ENCODE measurements at regions of chr7 and their contacts with region 1.

Region 1: GRCh38 chr7:92245487-92246362 is at the starts of genes ANKIB1 and KRIT1:
- DNase-seq: peak; percentile 87 to 91
- ATAC-seq: peak; percentile 95 to 97 (median 95)
- H3K4me3 ChIP-seq: peak within 1 kb of the TSS; percentile 66 to 91 (median 84)
- H3K27ac ChIP-seq: peak within 1 kb of the TSS; percentile 55 to 96 (median 89)
- H3K4me1 ChIP-seq: peaks cover 2 to 43% (median 36%) of the 10 kb centered on the region in 9 donors
- H3K27me3 ChIP-seq: no peaks in the 10 kb centered on the region
- CTCF ChIP-seq: peak in 6 of 9 donors; percentile 11 to 54 (median 36)
- total RNA-seq, gene ANKIB1: 28.7 to 71.0 (median 45.7) TPM
- total RNA-seq, gene KRIT1: 21.9 to 40.8 (median 32.1) TPM

Region 2: GRCh38 chr7:92228100-92228499 is 17.6 kb before region 1 on chr7:
- intact Hi-C with region 1: loop called in 1 of 10 experiments (anchors 1 kb)
- DNase-seq: no peak
- ATAC-seq: no peak
- H3K4me3 ChIP-seq: no peak overlapping the region
- H3K27ac ChIP-seq: no peak overlapping the region
- H3K4me1 ChIP-seq: no peaks in the 10 kb centered on the region
- H3K27me3 ChIP-seq: no peaks in the 10 kb centered on the region
- CTCF ChIP-seq: no peak

Region 3: DNA sequence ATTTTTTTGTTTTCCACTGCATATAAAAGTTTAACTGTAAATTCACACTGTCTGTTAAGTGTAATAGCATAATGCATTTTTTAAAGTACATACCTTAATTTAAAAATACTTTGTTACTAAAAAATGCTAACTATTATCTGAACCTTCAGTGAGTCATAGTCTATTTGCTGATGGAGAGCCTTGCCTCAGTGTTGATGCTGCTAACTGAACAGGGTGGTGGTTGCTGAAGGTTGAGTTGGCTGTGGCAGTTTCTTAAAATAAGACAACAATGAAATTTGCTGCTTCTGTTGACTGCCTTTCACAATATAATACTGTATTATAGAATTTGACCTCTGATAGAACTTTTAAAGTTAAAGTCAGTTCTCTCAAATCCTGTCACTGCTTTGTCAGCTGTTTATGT is 129.3 kb after region 1 on chr7:
- intact Hi-C with region 1: loop called in 1 of 10 experiments (anchors 10 kb)
- DNase-seq: no peak
- ATAC-seq: no peak
- H3K4me3 ChIP-seq: no peak overlapping the region
- H3K27ac ChIP-seq: no peak overlapping the region
- H3K4me1 ChIP-seq: no peaks in the 10 kb centered on the region
- H3K27me3 ChIP-seq: no peaks in the 10 kb centered on the region
- CTCF ChIP-seq: no peak

Region 4: GRCh38 chr7:92421676-92422435 is 176.1 kb after region 1 on chr7:
- intact Hi-C with region 1: loop called in 1 of 10 experiments (anchors 10 kb)
- DNase-seq: no peak
- ATAC-seq: no peak
- H3K4me3 ChIP-seq: no peak overlapping the region
- H3K27ac ChIP-seq: no peak overlapping the region
- H3K4me1 ChIP-seq: peaks cover 0 to 13% (median 0%) of the 10 kb centered on the region in 9 donors
- H3K27me3 ChIP-seq: peaks cover 0 to 17% (median 15%) of the 10 kb centered on the region in 7 donors
- CTCF ChIP-seq: no peak

Region 5: DNA sequence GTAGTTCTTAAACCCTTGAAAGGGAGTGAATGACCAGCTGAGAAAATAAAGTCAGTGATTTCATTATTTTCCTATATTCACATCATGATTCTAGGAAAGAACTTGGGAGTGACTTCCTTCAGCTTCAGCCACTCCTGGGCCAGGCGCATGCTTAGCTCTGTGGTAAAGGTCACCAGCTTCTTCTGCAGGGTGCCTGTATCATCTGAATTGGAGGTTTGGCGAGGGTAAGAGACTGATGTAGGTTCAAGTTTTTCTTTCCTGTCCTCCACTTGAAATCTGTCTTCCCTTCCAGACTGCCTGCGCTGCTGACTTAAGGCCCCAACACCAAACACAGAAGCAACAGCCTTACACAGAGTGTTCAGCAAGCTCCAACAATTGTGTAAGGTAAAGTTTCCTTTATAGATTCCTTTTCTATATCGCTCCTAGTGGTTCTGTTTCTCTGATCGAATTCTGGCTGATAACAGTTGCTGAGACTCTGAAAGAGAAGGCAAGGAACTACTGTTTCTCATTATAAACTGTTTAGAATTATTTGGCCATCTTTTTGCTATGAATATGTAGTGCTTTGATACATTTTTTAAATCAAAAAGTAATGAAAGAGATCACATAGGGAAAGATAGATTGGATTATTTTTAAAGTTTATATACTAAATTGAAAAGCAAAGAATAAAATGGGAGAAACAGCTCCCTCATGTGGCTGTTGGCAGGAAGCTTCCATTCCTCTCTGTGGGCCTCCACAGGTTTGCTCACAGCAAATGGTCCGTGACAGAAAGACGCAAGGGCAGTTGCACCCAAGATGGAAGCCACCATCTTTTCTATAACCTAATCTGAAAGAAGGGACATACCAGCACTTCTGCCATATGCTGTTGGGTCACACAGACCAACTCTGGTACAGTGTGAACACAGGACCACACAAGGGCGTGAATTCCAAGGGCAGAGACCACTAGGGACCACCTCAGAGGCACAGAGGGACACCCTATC is 215.6 kb after region 1 on chr7:
- intact Hi-C with region 1: loop called in 1 of 10 experiments (anchors 5 kb)
- DNase-seq: peak in 1 of 2 donors; percentile 5
- ATAC-seq: peak in 1 of 8 donors; percentile 34
- H3K4me3 ChIP-seq: no peak overlapping the region
- H3K27ac ChIP-seq: no peak overlapping the region
- H3K4me1 ChIP-seq: no peaks in the 10 kb centered on the region
- H3K27me3 ChIP-seq: no peaks in the 10 kb centered on the region
- CTCF ChIP-seq: peak in 8 of 9 donors; percentile 31 to 76 (median 61)

Measured in heart right ventricle (tissue), 16 donors.